ENCODE measurements at regions of chr16 and their contacts with region 1.

Region 1: DNA sequence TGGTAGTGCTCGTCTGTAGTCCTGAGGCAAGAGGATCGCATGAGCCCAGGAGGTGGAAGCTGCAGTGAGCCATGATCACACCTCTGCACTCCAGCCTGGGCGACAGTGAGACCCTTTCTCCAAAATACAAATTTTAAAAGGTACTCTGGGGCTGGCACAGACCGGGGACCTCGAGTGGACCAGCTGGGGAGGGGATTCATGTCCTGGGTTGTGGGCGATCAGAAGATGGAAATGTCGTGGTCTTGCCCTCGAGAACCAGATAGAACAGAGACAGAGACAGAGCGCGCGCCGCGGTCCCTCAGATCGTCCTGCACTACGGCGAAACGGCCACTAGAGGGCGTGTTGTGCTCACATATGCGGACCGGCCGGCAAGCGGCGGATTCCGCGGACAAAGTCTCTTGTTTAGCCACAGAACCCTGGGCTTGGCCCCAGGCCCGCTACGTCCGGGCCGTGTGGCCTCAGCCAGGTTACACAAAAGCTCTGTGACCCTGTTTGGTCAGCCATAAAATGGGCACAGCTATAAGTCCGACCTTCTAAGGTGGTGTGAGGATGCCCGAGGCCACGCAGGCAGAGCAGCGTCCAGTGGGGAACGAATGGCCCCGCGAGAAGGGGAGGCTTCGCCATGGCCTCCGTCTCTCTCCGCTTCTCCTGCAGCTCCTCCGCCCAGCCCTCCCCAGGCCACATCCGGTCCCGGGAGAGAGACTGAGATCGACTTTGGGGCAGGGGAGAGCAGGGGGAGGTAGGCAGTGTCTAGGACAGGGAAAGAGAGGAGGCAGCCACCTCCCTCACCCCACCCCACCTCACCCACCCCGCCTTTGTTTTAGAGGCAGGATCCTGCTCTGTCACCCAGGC is 14.6 kb upstream of the SBK1 start:
- DNase-seq: peak; percentile 84

Region 2: GRCh38 chr16:28218104-28218503 is 59.7 kb before region 1 on chr16:
- CTCF ChIA-PET with region 1: no interaction called
- POLR2A ChIA-PET with region 1: no interaction called
- DNase-seq: peak; percentile 55

Region 3: DNA sequence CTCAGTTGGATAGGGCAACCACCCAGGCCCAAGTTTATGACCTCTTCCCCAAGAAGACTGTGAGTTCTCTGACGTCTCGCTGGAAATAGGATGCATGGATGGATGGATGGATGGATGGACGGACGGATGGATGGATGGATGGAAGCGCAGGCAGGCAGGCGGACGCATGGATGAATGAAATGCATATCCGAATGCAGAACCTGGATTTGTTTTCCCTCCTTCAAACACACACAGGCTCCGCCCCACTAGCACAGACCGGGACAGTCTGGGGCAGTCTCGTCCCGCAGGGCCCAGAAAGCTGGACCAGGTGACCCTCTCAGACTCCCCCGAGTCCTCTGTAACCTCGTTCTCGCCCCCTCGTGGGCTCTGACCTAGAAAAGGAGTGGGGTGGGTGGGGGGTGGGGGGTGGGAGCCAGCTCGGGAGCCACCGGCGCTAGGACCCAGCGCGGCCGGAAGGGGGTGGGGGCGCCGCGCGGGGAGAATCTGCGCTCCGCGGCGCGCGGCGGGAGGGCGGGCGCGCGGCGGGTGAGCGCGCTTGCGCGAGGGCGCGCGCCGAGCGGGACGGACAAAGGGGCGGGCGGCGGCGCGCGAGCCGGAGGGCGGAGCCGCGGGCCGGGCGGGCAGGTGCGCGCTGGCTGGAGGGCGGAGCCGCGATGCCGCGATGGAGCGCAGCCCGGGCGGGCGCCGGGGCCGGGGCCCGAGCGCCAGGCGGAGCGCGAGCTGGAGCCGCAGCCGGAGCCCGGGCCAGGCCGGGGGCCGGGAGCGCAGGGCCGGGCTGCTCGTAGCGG is 14.3 kb after region 1 on chr16 and contains the start of gene SBK1:
- CTCF ChIA-PET with region 1: interaction called, 3 read pairs
- POLR2A ChIA-PET with region 1: interaction called, 15 read pairs
- DNase-seq: peak; percentile 97

Region 4: DNA sequence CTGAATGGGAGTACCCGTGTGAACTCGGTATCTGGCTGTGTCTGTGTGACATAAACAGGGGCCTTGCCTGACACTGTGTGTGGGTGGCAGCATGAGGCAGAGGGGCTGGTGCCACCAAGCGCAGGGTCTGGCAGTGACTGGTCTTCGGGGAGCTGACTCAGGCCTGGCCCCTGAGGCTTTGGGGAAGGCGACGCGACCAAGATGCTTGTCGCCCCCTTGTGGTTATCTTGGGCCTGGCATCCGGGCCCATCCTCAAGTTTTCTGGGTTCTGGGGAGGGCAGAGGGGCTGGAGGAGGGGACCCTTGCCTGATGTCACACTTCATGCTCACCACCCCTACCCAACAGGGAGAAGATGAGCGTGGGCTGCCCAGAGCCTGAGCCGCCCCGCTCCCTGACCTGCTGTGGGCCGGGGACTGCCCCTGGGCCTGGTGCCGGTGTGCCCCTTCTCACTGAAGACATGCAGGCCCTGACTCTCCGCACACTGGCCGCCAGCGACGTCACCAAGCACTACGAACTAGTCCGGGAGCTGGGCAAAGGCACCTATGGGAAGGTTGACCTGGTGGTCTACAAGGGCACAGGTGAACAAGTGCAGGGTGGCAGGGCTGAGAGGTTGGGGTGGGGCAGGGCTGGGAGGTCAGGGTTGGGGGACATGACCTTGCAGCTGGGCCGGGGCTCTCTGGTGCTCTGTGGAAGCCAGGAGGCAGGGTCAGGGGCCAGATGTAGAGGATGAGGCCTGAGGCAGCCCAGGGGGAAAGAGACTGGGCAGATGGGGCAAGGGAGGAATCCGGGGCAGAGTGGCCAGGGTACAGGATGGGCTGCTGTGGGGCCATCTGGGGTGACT is 39.5 kb after region 1 on chr16:
- CTCF ChIA-PET with region 1: interaction called, 11 read pairs
- POLR2A ChIA-PET with region 1: interaction called, 8 read pairs
- DNase-seq: peak; percentile 82

Measured in HEK293T (cell line).